Endothelial cell of umbilical vein (primary cell): ENCODE measurements at regions of chr14 and their contacts with region 1.

Region 1: GRCh38 chr14:90697577-90698206 is 118.5 kb downstream of the TTC7B start:
- DNase-seq: peak; percentile 76
- H3K4me3 ChIP-seq: no peak overlapping the region
- H3K27ac ChIP-seq: no peak overlapping the region
- H3K4me1 ChIP-seq: peaks cover 18% of the 10 kb centered on the region
- H3K27me3 ChIP-seq: no peaks in the 10 kb centered on the region
- CTCF ChIP-seq: peak; percentile 92
- POLR2A ChIP-seq: no peak

Region 2: DNA sequence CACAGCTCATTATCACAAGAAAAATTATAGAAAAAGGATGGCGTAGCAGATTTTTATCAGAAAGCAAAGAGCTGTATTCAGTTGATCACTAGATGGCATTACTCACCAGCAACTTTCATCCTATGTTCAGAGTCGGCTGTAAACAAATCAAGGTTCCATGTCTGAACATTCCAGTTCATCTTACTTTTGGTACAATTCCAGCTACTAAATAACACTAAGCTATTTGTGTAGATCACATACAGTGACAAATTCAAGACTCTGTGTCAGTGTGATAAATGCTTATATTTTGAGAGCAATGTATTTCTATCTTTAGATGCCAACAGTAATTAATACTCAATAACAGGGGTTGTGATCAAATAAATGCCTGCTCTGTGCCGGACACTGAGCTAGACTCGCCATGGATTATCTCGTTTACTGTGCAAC is 396.0 kb before region 1 on chr14:
- CTCF ChIA-PET with region 1: interaction called, 54 read pairs
- POLR2A ChIA-PET with region 1: no interaction called
- dilution Hi-C with region 1: no loop called
- intact Hi-C with region 1: loop called (anchors 1 kb)
- DNase-seq: peak; percentile 76
- H3K4me3 ChIP-seq: no peak overlapping the region
- H3K27ac ChIP-seq: no peak overlapping the region
- H3K4me1 ChIP-seq: no peaks in the 10 kb centered on the region
- H3K27me3 ChIP-seq: no peaks in the 10 kb centered on the region
- CTCF ChIP-seq: peak; percentile 22 to 41
- POLR2A ChIP-seq: no peak

Region 3: DNA sequence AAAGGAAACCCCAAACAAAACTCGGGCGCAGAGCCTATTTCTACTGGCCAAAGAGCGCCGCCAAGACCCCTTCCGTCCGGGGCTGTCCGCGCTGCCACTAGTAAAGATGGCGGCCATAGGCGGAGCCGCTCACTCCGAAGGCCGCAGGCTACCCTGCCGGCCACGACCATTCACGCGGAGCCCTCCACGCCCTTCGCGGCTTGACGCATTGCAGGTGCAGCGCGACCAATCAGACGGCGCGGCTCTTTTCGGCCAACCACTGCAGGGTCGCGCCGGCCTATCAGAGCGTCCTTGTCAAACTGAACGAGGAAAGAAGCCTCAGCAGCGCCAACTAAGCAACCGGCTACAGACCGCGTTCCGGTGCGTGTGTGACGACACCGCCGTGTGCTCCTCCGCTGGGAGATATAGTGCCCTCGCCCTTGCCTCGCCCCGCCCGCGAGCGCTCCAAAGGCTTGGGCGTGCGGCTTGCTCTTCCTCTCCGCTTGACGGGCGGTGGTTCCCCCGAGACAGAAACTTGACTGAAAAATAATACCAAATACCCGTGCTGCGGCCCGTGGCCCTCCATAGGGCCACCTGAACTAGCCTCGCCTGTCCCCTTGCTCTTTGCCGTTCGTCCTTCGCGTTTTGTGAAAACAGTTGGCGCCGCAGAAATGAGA is 314.5 kb before region 1 on chr14:
- CTCF ChIA-PET with region 1: interaction called, 10 read pairs
- POLR2A ChIA-PET with region 1: interaction called, 3 read pairs
- dilution Hi-C with region 1: no loop called
- intact Hi-C with region 1: loop called (anchors 5 kb)
- DNase-seq: peak; percentile 100
- H3K4me3 ChIP-seq: peak overlapping the region; percentile 47 to 70 (median 58)
- H3K27ac ChIP-seq: peak overlapping the region; percentile 97
- H3K4me1 ChIP-seq: peaks cover 17% of the 10 kb centered on the region
- H3K27me3 ChIP-seq: peaks cover 0 to 2% of the 10 kb centered on the region in 2 experiments
- CTCF ChIP-seq: no peak
- POLR2A ChIP-seq: peak; percentile 77

Region 4: GRCh38 chr14:90518941-90519256 is 178.8 kb before region 1 on chr14:
- CTCF ChIA-PET with region 1: no interaction called
- POLR2A ChIA-PET with region 1: no interaction called
- dilution Hi-C with region 1: no loop called
- intact Hi-C with region 1: loop called (anchors 1 kb)
- DNase-seq: peak; percentile 44
- H3K4me3 ChIP-seq: no peak overlapping the region
- H3K27ac ChIP-seq: no peak overlapping the region
- H3K4me1 ChIP-seq: no peaks in the 10 kb centered on the region
- H3K27me3 ChIP-seq: no peaks in the 10 kb centered on the region
- CTCF ChIP-seq: peak; percentile 58 to 75
- POLR2A ChIP-seq: no peak

Region 5: DNA sequence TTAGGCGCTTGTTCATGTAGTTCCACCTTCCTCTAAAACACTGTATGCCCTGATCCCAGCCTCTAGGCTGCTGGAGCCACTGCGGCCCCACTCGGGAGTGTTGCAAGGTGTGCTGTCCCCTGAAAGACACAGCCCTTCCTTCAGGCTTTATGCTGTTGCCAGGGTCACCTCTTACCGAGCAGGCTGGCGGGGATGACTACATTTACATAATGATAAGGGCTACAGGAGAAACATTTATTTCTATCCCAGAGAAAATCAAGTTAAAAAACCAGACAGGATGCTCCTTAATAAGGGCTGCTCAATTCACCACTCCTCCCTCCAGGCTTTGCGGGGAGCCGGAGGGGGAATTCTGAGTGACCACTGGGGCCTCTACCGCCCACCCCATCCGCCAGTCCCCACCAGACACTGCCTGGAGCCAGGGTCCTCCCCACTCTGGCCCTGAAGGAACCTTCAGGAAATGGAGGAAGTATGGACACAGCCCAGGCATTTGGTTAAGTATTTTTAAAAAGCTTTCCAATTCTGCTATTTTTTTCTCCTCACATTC is 82.1 kb before region 1 on chr14:
- CTCF ChIA-PET with region 1: interaction called, 4 read pairs
- POLR2A ChIA-PET with region 1: no interaction called
- dilution Hi-C with region 1: no loop called
- intact Hi-C with region 1: loop called (anchors 2 kb)
- DNase-seq: peak; percentile 78
- H3K4me3 ChIP-seq: peak overlapping the region in 2 of 3 experiments; percentile 19 to 38
- H3K27ac ChIP-seq: peak overlapping the region; percentile 93
- H3K4me1 ChIP-seq: peaks cover 71% of the 10 kb centered on the region
- H3K27me3 ChIP-seq: no peaks in the 10 kb centered on the region
- CTCF ChIP-seq: no peak
- POLR2A ChIP-seq: no peak